ENCODE measurements at regions of chr1 and their contacts with region 1.

Region 1: DNA sequence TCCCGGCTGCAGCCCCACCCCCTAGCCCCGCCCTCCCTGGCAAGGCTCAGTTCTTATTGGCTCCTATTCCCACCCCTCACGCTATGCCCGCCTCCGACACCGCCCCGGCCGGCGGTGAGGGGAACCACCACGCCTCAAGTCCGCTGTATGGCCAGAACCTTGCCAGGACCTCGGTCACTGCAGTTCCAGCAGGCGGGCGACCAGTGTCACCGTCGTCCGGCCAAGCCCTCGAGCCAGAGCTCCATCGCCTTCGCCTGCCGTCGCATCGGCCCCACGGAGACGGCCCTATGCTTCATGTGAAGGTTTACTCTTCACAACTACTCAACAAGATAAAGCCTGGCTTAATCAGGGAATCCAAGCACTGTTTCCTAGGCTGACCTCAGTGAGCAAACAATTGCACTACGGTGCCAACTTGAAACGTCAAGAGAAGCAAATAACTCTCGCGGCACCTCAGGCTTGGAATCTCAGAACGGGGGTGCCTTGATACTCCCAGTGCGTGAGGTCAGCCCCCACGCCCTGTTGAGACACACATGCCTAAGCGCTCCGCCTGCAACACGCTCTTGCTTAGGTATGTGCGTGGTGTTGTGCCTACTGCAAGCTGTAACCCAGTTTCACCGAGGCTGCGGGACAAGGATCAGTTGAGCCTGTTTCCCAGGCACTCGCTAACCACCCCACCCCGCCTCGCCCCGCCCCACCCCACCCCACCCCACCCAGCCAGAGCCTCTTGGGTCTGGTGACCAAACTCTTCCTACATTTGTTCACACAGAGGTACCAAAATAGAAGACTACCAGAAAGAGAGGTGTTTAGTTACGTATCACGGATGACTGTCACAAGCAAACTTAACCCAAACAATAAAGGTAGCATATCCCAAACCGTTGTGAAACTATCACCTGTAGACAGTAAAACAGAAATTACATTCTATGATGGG is 498 bp upstream of the DENND2C start:
- DNase-seq: peak; percentile 88
- ATAC-seq: peak; percentile 95
- H3K4me3 ChIP-seq: peak overlapping the region; percentile 68 to 85
- H3K27ac ChIP-seq: peak overlapping the region; percentile 59
- H3K4me1 ChIP-seq: peaks cover 11 to 22% of the 10 kb centered on the region in 2 experiments; a peak in 3 of 4 replicates
- H3K27me3 ChIP-seq: no peaks in the 10 kb centered on the region
- CTCF ChIP-seq: no peak
- POLR2A ChIP-seq: peak; percentile 72
- RAD21 ChIP-seq: no peak

Region 2: DNA sequence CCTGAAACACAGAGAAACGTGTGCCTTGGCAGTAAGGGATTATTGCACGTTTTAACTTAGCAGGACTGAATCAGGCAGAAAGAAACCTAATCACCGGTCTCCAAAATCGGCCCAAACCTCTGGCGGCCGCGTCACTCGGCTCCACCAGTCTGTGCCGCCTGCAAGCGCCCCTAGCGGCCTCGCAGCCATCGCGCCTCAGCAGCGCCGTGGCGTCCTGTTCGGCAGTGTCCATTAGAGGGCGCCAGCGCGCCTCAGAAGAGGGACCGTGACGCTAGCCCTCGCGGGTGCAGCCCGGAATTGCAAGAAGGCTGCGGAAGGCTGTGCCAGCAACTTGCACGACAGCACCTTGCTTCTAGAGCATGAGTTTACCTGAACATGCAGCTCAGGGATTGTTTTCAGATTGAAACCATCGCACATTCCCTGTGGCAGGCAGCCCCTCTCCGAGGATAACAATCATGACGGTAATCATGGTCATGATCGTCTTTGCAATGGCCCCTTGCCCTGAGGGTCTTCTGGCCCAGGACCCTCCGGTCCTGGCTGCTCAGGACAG is 323.8 kb before region 1 on chr1:
- CTCF ChIA-PET with region 1: interaction called, 19 read pairs
- POLR2A ChIA-PET with region 1: no interaction called
- RAD21 ChIA-PET with region 1: no interaction called
- intact Hi-C with region 1: loop called (anchors 1 kb)
- DNase-seq: peak; percentile 89
- ATAC-seq: peak; percentile 99
- H3K4me3 ChIP-seq: peak overlapping the region; percentile 30 to 47
- H3K27ac ChIP-seq: no peak overlapping the region
- H3K4me1 ChIP-seq: peaks cover 0 to 11% of the 10 kb centered on the region in 2 experiments; a peak in 1 of 4 replicates
- H3K27me3 ChIP-seq: no peaks in the 10 kb centered on the region
- CTCF ChIP-seq: peak; percentile 100
- POLR2A ChIP-seq: no peak
- RAD21 ChIP-seq: peak; percentile 99

Region 3: GRCh38 chr1:114472408-114472807 is 197.9 kb before region 1 on chr1:
- CTCF ChIA-PET with region 1: no interaction called
- POLR2A ChIA-PET with region 1: no interaction called
- RAD21 ChIA-PET with region 1: no interaction called
- intact Hi-C with region 1: loop called (anchors 2 kb)
- DNase-seq: no peak
- ATAC-seq: no peak
- H3K4me3 ChIP-seq: no peak overlapping the region; a peak in 1 of 4 replicates
- H3K27ac ChIP-seq: peak overlapping the region; percentile 95
- H3K4me1 ChIP-seq: peaks cover 35 to 79% of the 10 kb centered on the region in 2 experiments
- H3K27me3 ChIP-seq: no peaks in the 10 kb centered on the region
- CTCF ChIP-seq: no peak
- POLR2A ChIP-seq: no peak
- RAD21 ChIP-seq: no peak

Region 4: DNA sequence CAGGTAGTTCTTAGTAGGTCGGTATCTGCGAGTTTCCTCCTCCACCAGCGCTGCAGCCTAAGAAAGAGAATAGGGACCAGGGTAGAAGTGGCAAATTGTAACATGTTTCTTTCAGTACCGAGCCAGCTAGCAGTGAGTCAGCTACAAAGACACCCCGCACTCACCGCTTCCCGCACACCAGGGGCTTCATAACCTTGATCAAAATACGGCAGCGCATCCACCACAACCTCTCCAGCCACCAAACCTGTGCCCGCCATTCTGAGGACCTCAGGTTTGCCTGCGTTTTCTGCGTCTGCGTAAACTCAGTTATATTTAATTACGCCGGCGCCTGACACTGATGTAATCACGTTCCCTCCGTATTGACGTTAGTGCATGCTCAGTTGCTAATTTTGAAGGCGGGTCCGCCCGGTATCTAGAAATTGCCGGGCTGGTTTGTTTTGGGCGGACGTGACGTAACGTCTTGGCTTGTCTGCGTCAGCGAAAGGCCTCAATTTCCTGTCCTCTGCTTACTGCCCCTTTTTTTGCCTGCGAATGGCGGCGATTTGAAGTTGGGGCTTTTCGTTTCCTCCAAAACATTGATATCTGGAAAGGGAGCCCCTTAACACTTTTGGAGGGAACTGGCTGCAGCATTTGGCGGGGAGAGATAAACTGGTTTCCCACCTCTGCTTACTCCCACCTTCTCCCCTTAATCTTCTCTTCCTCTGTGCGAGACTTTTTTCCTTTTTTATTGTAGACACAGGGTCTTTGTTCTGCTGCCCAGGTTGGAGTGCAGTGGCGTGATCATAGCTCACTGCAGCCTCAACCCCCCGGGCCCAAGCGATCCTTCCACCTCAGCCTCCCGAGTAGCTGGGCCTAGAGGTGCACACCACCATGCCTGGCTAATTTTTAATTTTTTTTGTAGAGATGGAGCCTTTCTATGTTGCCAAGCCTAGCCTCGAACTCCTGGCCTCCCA is 88.7 kb before region 1 on chr1 and contains the start of gene BCAS2:
- CTCF ChIA-PET with region 1: no interaction called
- POLR2A ChIA-PET with region 1: no interaction called
- RAD21 ChIA-PET with region 1: no interaction called
- intact Hi-C with region 1: loop called (anchors 2 kb)
- DNase-seq: peak; percentile 98
- ATAC-seq: peak; percentile 97
- H3K4me3 ChIP-seq: peak within 1 kb of the TSS; percentile 78 to 87
- H3K27ac ChIP-seq: peak within 1 kb of the TSS; percentile 60
- H3K4me1 ChIP-seq: peaks cover 6 to 14% of the 10 kb centered on the region in 2 experiments; a peak in 3 of 4 replicates
- H3K27me3 ChIP-seq: no peaks in the 10 kb centered on the region
- CTCF ChIP-seq: no peak
- POLR2A ChIP-seq: peak; percentile 96
- RAD21 ChIP-seq: no peak
- total RNA-seq, gene BCAS2: 45.2 TPM

Region 5: DNA sequence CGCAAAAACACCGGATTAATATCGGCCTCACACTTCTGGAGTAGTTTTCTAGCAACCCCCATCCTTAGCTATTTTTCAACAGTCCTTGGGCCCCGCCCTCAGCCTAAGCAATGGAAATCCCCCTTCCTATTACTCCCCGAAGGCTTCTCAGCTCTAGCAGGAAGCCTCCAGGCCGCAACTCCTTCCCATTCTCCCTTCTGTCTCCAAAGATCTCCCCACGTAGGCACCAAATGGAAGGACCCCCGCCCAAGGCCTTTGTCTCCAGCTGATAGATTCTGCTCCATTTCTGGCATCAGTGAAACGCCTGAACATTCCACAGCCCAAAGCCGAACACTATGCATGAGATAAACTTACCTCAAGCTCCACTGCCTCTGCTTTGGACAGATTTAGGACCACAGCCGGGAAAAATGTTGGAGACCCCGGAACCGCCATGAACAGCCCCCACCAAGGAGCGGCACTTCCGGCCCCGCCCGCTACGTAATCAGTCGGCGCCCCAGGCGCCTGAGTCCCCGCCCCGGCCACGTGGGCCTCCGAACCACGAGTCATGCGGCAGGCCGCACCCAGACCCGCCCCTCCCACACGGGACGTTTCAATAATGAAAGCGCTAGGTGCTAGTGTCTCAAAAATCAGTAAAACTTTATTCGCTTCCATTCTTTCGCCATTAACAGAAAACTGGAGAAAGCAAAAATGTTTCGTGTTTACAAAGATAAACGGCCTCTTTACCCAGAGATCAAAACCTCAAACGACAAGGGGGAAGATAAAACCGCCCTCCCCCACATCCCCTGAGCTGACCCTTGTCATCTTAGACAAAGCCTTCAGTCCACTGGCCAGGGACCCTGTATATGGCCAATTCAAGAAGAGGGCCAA is 46.2 kb after region 1 on chr1 and contains the start of gene NRAS:
- CTCF ChIA-PET with region 1: no interaction called
- POLR2A ChIA-PET with region 1: no interaction called
- RAD21 ChIA-PET with region 1: no interaction called
- intact Hi-C with region 1: loop called (anchors 1 kb)
- DNase-seq: peak; percentile 79
- ATAC-seq: peak; percentile 95
- H3K4me3 ChIP-seq: peak within 1 kb of the TSS; percentile 89 to 99
- H3K27ac ChIP-seq: peak within 1 kb of the TSS; percentile 65
- H3K4me1 ChIP-seq: peaks cover 0 to 12% of the 10 kb centered on the region in 2 experiments; a peak in 2 of 4 replicates
- H3K27me3 ChIP-seq: no peaks in the 10 kb centered on the region
- CTCF ChIP-seq: no peak
- POLR2A ChIP-seq: no peak
- RAD21 ChIP-seq: no peak
- total RNA-seq, gene NRAS: 48.0 TPM

Region 6: DNA sequence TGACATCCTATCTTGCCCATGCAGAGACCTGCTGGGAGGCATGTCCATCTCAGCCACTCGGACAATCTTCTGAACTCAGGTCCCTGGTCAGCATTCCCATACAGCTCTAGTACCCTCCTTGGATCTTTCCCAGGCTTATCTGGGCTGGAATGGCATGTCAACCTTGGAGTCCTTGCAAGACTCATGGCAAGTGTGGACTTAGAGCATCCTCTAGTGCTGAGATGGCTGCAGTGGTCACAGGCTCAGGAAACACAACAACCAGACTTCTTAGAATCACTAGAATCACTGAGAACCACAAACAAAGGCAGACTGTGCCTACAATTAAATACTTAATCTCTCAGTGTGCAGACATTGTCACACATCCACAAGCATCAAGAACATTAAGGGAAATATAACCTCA is 286.2 kb after region 1 on chr1:
- CTCF ChIA-PET with region 1: no interaction called
- POLR2A ChIA-PET with region 1: no interaction called
- RAD21 ChIA-PET with region 1: no interaction called
- intact Hi-C with region 1: loop called (anchors 10 kb)
- DNase-seq: peak; percentile 21
- ATAC-seq: peak; percentile 64
- H3K4me3 ChIP-seq: no peak overlapping the region
- H3K27ac ChIP-seq: no peak overlapping the region
- H3K4me1 ChIP-seq: no peaks in the 10 kb centered on the region
- H3K27me3 ChIP-seq: no peaks in the 10 kb centered on the region
- CTCF ChIP-seq: peak; percentile 24 to 53 (median 46); a peak in 5 of 6 replicates
- POLR2A ChIP-seq: no peak
- RAD21 ChIP-seq: peak; percentile 72

Measured in HCT116 (cell line).